ENCODE measurements at regions of chr17 and their contacts with region 1.

Region 1: GRCh38 chr17:10844621-10845387 is 6.9 kb upstream of the PIRT start:
- DNase-seq: peak; percentile 77
- ATAC-seq: peak; percentile 92
- H3K4me3 Mint-ChIP-seq: peak overlapping the region; percentile 73
- H3K27ac Mint-ChIP-seq: no peak overlapping the region
- H3K4me1 Mint-ChIP-seq: peaks cover 5% of the 10 kb centered on the region
- H3K27me3 Mint-ChIP-seq: peaks cover 22% of the 10 kb centered on the region

Region 2: GRCh38 chr17:10631048-10631700 is 213.6 kb before region 1 on chr17:
- CTCF ChIA-PET with region 1: interaction called, 13 read pairs
- DNase-seq: peak; percentile 44
- ATAC-seq: no peak
- H3K4me3 Mint-ChIP-seq: no peak overlapping the region
- H3K27ac Mint-ChIP-seq: no peak overlapping the region
- H3K4me1 Mint-ChIP-seq: peaks cover 3% of the 10 kb centered on the region
- H3K27me3 Mint-ChIP-seq: no peaks in the 10 kb centered on the region

Region 3: DNA sequence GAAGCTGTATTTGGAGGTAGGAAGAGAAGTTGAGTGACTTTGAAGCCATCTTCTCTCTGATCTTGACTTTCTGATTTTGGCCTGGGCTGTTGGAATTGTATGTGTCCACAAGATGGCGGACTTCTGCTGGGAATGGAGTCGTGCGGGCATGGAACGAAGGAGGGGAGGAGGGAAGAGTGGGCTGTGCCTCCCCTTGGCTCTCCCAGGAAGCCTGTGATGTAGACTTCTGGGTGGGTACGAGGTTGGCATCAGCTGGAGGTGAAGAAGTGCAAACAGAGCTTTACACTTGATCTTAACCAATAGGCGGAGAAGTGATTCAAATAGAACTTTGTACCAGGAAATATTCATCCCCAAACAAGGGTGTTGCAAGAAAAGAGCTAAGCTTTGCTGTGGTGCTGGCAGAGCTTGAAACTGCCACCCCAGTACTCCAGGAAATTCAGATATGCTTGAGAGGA is 107.6 kb before region 1 on chr17:
- CTCF ChIA-PET with region 1: interaction called, 11 read pairs
- DNase-seq: peak; percentile 49
- ATAC-seq: peak; percentile 57
- H3K4me3 Mint-ChIP-seq: no peak overlapping the region
- H3K27ac Mint-ChIP-seq: no peak overlapping the region
- H3K4me1 Mint-ChIP-seq: peaks cover 4% of the 10 kb centered on the region
- H3K27me3 Mint-ChIP-seq: peaks cover 3% of the 10 kb centered on the region

Region 4: GRCh38 chr17:10790491-10791401 is 54.1 kb before region 1 on chr17:
- CTCF ChIA-PET with region 1: no interaction called
- DNase-seq: no peak
- ATAC-seq: no peak
- H3K4me3 Mint-ChIP-seq: no peak overlapping the region
- H3K27ac Mint-ChIP-seq: no peak overlapping the region
- H3K4me1 Mint-ChIP-seq: peaks cover 5% of the 10 kb centered on the region
- H3K27me3 Mint-ChIP-seq: no peaks in the 10 kb centered on the region